WTC11 (cell line): ENCODE measurements at regions of chr3 and their contacts with region 1.

Region 1: DNA sequence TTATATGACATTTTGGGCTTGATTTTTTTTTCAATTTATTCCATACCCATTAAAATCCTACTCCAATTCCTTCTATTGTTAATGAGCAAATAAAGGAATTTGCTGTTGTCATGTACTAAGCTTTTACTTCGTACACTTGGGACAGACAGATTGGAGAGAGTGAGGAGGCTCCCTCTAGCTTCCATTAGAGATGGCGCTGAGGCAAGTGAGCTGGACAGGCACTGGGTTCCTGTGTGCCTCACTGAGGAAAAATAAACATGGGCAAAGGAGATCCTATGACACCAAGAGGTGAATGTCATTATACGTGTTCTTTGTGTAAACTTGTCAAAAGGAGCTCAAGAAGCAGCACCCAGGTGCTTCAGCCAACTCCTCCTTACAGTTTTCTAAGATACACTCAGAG is 441.2 kb upstream of the MDFIC2 start:
- DNase-seq: peak; percentile 12
- ATAC-seq: peak; percentile 84
- H3K4me3 Mint-ChIP-seq: no peak overlapping the region
- H3K27ac Mint-ChIP-seq: no peak overlapping the region
- H3K4me1 Mint-ChIP-seq: peaks cover 7% of the 10 kb centered on the region
- H3K27me3 Mint-ChIP-seq: no peaks in the 10 kb centered on the region
- CTCF ChIP-seq: no peak

Region 2: DNA sequence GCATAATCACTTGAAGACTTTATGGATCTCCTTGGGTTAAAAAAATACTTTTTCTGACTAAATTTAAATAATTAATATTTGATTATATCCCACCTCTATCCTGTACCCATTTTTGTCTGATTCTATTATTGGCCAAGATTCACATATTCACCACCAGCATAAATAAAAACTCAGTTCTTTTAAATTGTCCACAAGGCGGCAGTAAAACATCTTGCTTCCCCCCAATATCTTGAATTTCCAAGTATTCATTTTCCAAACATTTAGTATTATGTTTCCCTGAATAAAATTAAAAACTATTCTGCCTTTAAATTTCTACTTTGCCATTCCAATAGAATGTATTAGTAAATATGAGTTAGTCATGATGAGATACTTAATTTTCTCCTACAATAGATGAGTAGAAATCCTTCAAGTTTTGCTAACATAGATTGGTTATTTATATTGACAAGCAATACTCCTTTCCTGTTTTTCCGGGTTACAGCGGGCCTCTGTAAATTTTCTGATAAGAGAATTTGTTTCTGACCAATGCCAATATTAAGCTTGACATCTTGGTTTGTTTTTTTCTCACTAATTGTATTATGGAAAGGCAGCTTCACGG is 222.4 kb before region 1 on chr3:
- CTCF ChIA-PET with region 1: interaction called, 15 read pairs
- POLR2A ChIA-PET with region 1: no interaction called
- DNase-seq: no peak
- ATAC-seq: no peak
- H3K4me3 Mint-ChIP-seq: no peak overlapping the region
- H3K27ac Mint-ChIP-seq: no peak overlapping the region
- H3K4me1 Mint-ChIP-seq: peaks cover 61% of the 10 kb centered on the region
- H3K27me3 Mint-ChIP-seq: peaks cover 71% of the 10 kb centered on the region
- CTCF ChIP-seq: peak; percentile 30; the same call in 1 of the 2 replicates

Region 3: GRCh38 chr3:70716832-70717231 is 36.8 kb before region 1 on chr3:
- CTCF ChIA-PET with region 1: interaction called, 11 read pairs
- POLR2A ChIA-PET with region 1: no interaction called
- DNase-seq: no peak
- ATAC-seq: no peak
- H3K4me3 Mint-ChIP-seq: no peak overlapping the region
- H3K27ac Mint-ChIP-seq: no peak overlapping the region
- H3K4me1 Mint-ChIP-seq: peaks cover 17% of the 10 kb centered on the region
- H3K27me3 Mint-ChIP-seq: peaks cover 11% of the 10 kb centered on the region
- CTCF ChIP-seq: no peak

Region 4: GRCh38 chr3:70737678-70738306 is 15.8 kb before region 1 on chr3:
- CTCF ChIA-PET with region 1: no interaction called
- POLR2A ChIA-PET with region 1: no interaction called
- DNase-seq: no peak
- ATAC-seq: peak; percentile 24; the same call in 1 of the 2 replicates
- H3K4me3 Mint-ChIP-seq: no peak overlapping the region
- H3K27ac Mint-ChIP-seq: no peak overlapping the region
- H3K4me1 Mint-ChIP-seq: peaks cover 9% of the 10 kb centered on the region
- H3K27me3 Mint-ChIP-seq: no peaks in the 10 kb centered on the region
- CTCF ChIP-seq: no peak